ENCODE measurements at regions of chr17 and their contacts with region 1.

Region 1: GRCh38 chr17:42459256-42459800 is 650 bp downstream of the ATP6V0A1 start:
- DNase-seq: peak; percentile 36 to 57
- ATAC-seq: peak; percentile 46 to 52
- H3K4me3 ChIP-seq: peak overlapping the region; percentile 78 to 95 (median 92)
- H3K27ac ChIP-seq: peak overlapping the region; percentile 97 to 98 (median 98)
- H3K4me1 ChIP-seq: peaks cover 35 to 38% of the 10 kb centered on the region in 2 donors
- H3K27me3 ChIP-seq: no peaks in the 10 kb centered on the region
- CTCF ChIP-seq: peak in 2 of 5 experiments; percentile 36 to 49
- POLR2A ChIP-seq: no peak

Region 2: GRCh38 chr17:42312285-42313130 is 146.8 kb before region 1 on chr17:
- in situ Hi-C with region 1: no loop called
- intact Hi-C with region 1: loop called (anchors 5 kb)
- DNase-seq: peak; percentile 84 to 91
- ATAC-seq: peak; percentile 72 to 83
- H3K4me3 ChIP-seq: peak overlapping the region in 3 of 4 donors; percentile 12 to 53 (median 41)
- H3K27ac ChIP-seq: peak overlapping the region; percentile 84 to 95 (median 88)
- H3K4me1 ChIP-seq: peaks cover 16% of the 10 kb centered on the region in 2 donors
- H3K27me3 ChIP-seq: no peaks in the 10 kb centered on the region
- CTCF ChIP-seq: peak; percentile 32 to 77 (median 70)
- POLR2A ChIP-seq: no peak

Region 3: DNA sequence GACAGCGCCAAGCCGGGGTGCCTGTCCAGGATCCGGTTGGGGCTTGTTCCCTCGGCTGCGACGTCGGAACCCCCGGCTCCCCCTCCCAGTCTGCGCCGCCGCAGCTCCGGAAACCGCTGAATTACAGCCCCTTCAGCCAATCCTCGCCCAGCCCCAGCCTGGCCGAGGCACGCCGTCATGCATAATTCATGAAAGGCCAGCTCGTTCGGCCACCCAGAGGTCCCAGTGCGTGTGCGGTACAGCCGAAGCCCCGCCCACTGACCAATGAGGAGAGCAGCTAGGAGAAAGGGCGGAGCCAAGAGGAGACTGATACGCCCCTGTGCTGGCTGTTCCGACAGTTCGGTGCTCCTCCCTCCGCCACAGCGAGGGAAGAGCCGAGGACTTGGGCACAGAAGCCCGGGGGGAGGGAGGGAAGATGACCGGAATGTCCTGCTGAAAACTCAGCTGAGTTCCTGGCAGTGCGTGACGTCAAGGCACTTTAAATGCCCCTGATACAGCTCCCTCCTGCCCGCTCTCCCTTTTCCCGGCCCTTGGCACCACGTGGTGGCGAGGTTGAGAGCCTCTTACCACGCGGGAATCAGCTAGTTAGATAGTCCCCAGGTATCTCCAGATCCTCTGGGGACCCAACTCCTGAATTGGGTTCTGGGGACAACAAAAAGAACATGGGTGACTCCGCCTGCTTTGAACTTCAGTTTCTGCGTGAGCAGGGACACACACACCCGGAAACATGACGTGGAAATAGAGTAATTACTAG is 70.8 kb before region 1 on chr17 and contains the start of gene STAT3:
- in situ Hi-C with region 1: no loop called
- intact Hi-C with region 1: loop called (anchors 1 kb)
- DNase-seq: peak; percentile 100
- ATAC-seq: peak; percentile 87 to 94
- H3K4me3 ChIP-seq: peak within 1 kb of the TSS; percentile 93 to 98 (median 96)
- H3K27ac ChIP-seq: peak within 1 kb of the TSS; percentile 98 to 99 (median 99)
- H3K4me1 ChIP-seq: peaks cover 21 to 34% of the 10 kb centered on the region in 2 donors
- H3K27me3 ChIP-seq: no peaks in the 10 kb centered on the region
- CTCF ChIP-seq: peak in 1 of 5 experiments; percentile 19
- POLR2A ChIP-seq: peak; percentile 96 to 99
- total RNA-seq, gene STAT3: 88.4 to 203 (median 130) TPM

Region 4: DNA sequence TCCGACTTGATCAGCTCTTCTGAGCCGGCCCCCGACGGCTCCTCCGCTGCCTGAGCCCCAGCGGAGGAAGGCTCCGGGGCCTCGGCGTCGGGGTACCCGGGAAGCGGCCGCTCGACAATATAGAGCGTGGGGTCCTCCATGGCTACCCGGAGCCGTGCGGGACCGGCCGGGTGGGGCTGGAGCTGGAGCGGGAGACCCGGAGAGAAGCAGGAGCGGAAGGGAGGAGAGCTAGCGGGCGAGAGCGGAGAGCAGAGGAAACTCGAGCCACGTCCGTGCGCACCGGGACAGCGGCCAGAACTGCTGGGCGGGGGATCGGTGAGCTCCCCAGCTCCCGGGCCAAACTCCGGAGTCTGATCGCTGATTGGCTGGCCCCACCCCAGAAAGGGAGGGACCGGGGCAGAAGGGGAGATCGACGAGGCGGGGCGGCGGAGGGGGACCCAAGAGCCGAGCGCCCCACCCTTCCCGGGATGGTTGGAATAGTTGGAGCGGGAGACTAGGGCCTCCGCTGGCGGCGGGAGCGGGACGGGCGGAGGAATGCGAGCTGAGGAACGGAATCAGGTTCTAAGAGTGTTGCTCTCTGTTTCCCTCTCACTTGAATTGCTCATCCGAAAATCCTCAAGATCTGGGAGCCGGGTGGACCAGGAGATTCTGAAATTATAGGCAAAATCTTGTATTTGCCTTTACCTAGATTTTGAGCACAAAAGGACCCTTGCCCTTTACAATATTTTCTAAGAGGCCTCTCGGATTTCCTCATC is 36.2 kb before region 1 on chr17 and contains the start of gene CAVIN1:
- in situ Hi-C with region 1: no loop called
- intact Hi-C with region 1: loop called (anchors 1 kb)
- DNase-seq: peak; percentile 99 to 100
- ATAC-seq: peak; percentile 80 to 88
- H3K4me3 ChIP-seq: peak within 1 kb of the TSS; percentile 87 to 99 (median 95)
- H3K27ac ChIP-seq: peak within 1 kb of the TSS; percentile 96 to 100 (median 98)
- H3K4me1 ChIP-seq: peaks cover 30 to 35% of the 10 kb centered on the region in 2 donors
- H3K27me3 ChIP-seq: no peaks in the 10 kb centered on the region
- CTCF ChIP-seq: peak in 1 of 5 experiments; percentile 8
- POLR2A ChIP-seq: peak; percentile 92 to 95
- total RNA-seq, gene CAVIN1: 64.9 to 137 (median 125) TPM

Region 5: GRCh38 chr17:42517516-42517915 is 58.2 kb after region 1 on chr17:
- in situ Hi-C with region 1: no loop called
- intact Hi-C with region 1: loop called (anchors 2 kb)
- DNase-seq: peak; percentile 54 to 81
- ATAC-seq: peak; percentile 14 to 24
- H3K4me3 ChIP-seq: no peak overlapping the region
- H3K27ac ChIP-seq: peak overlapping the region; percentile 77 to 89 (median 86)
- H3K4me1 ChIP-seq: peaks cover 57 to 65% of the 10 kb centered on the region in 2 donors
- H3K27me3 ChIP-seq: no peaks in the 10 kb centered on the region
- CTCF ChIP-seq: peak; percentile 69 to 88 (median 85)
- POLR2A ChIP-seq: no peak